ENCODE measurements at regions of chr3 and their contacts with region 1.

Region 1: DNA sequence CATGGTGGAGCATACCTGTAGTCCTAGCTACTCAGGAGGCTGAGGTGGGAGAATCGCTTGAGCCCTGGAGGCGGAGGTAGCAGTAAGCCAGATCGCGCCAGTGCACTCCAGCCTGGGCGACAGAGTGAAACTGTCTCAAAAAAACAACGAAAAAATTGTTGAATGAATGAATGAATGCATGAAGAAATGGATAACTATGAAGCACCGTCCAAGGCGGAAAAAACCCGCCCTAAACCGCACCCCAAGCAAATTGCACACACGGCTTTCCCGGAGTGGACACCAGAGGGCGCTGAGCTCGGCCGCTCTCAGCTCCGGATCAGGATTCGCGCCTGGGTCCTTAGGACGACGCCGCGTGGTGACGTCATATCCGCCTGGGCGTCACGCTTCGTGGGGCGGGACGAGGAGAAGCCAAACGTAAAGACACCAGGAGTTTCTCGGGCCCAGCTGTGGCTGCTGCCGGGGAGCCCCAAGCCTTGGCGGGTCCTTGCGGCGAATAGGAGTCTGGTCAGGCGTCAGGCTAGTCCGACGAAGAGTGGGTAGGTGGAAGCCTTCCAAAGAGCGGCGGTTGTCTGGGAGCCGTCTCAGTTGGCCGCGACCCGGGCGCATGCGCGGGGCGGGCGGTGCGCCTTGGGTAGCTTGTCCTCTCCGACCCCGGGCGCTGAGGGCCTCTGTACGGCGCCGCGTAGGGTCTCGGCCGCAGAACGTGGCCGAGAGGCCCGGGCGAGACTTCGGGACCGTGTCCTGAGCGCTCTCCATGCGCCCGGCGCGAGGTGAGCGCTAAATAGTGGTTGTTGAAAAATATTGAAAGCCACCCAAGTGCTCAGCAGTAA is at the starts of genes HTD2 and RPP14:
- DNase-seq: peak; percentile 97 to 100 (median 99)
- ATAC-seq: peak; percentile 89
- H3K4me3 ChIP-seq: peak within 1 kb of the TSS; percentile 85 to 99
- H3K4me3 Mint-ChIP-seq: peak within 1 kb of the TSS; percentile 97
- H3K27ac ChIP-seq: peak within 1 kb of the TSS; percentile 91 to 100
- H3K27ac Mint-ChIP-seq: peak within 1 kb of the TSS; percentile 99
- H3K4me1 ChIP-seq: peaks cover 18% of the 10 kb centered on the region
- H3K4me1 Mint-ChIP-seq: peaks cover 44% of the 10 kb centered on the region
- H3K27me3 ChIP-seq: no peaks in the 10 kb centered on the region
- H3K27me3 Mint-ChIP-seq: peaks cover 14% of the 10 kb centered on the region
- CTCF ChIP-seq: peak; percentile 93
- total RNA-seq, gene HTD2: 6.4 to 8.9 TPM
- total RNA-seq, gene RPP14: 18.3 to 20.4 TPM

Region 2: GRCh38 chr3:57227204-57227929 is 1078.7 kb before region 1 on chr3 and contains the start of gene APPL1:
- CTCF ChIA-PET with region 1: no interaction called
- POLR2A ChIA-PET with region 1: no interaction called
- intact Hi-C with region 1: loop called in 1 of 2 experiments (anchors 10 kb)
- DNase-seq: peak; percentile 68 to 93 (median 87)
- ATAC-seq: peak; percentile 89
- H3K4me3 ChIP-seq: peak within 1 kb of the TSS; percentile 82 to 91
- H3K4me3 Mint-ChIP-seq: peak within 1 kb of the TSS; percentile 93
- H3K27ac ChIP-seq: peak within 1 kb of the TSS; percentile 48 to 68
- H3K27ac Mint-ChIP-seq: peak within 1 kb of the TSS; percentile 89
- H3K4me1 ChIP-seq: peaks cover 11% of the 10 kb centered on the region
- H3K4me1 Mint-ChIP-seq: peaks cover 30% of the 10 kb centered on the region
- H3K27me3 ChIP-seq: no peaks in the 10 kb centered on the region
- H3K27me3 Mint-ChIP-seq: no peaks in the 10 kb centered on the region
- CTCF ChIP-seq: no peak
- total RNA-seq, gene APPL1: 19.3 to 23.4 TPM

Region 3: GRCh38 chr3:57755668-57756527 is 550.2 kb before region 1 on chr3 and contains the start of gene SLMAP:
- CTCF ChIA-PET with region 1: no interaction called
- POLR2A ChIA-PET with region 1: no interaction called
- intact Hi-C with region 1: loop called (anchors 2 to 5 kb)
- DNase-seq: peak; percentile 93 to 98 (median 96)
- ATAC-seq: peak; percentile 92
- H3K4me3 ChIP-seq: peak within 1 kb of the TSS; percentile 69 to 80
- H3K4me3 Mint-ChIP-seq: peak within 1 kb of the TSS; percentile 97
- H3K27ac ChIP-seq: peak within 1 kb of the TSS; percentile 45 to 79
- H3K27ac Mint-ChIP-seq: peak within 1 kb of the TSS; percentile 95
- H3K4me1 ChIP-seq: peaks cover 34% of the 10 kb centered on the region
- H3K4me1 Mint-ChIP-seq: peaks cover 44% of the 10 kb centered on the region
- H3K27me3 ChIP-seq: no peaks in the 10 kb centered on the region
- H3K27me3 Mint-ChIP-seq: no peaks in the 10 kb centered on the region
- CTCF ChIP-seq: no peak
- total RNA-seq, gene SLMAP: 55.0 to 56.7 TPM

Region 4: GRCh38 chr3:58237238-58237940 is 68.7 kb before region 1 on chr3 and contains the start of gene ABHD6:
- CTCF ChIA-PET with region 1: interaction called, 21 read pairs
- POLR2A ChIA-PET with region 1: interaction called, 6 read pairs
- intact Hi-C with region 1: loop called (anchors 1 kb)
- DNase-seq: peak; percentile 73 to 92 (median 83)
- ATAC-seq: peak; percentile 84
- H3K4me3 ChIP-seq: peak within 1 kb of the TSS; percentile 57 to 79
- H3K4me3 Mint-ChIP-seq: peak within 1 kb of the TSS; percentile 92
- H3K27ac ChIP-seq: peak within 1 kb of the TSS; percentile 38 to 49
- H3K27ac Mint-ChIP-seq: peak within 1 kb of the TSS; percentile 87
- H3K4me1 ChIP-seq: peaks cover 7% of the 10 kb centered on the region
- H3K4me1 Mint-ChIP-seq: peaks cover 17% of the 10 kb centered on the region
- H3K27me3 ChIP-seq: no peaks in the 10 kb centered on the region
- H3K27me3 Mint-ChIP-seq: peaks cover 14% of the 10 kb centered on the region
- CTCF ChIP-seq: no peak
- total RNA-seq, gene ABHD6: 1.9 to 2.1 TPM

Region 5: GRCh38 chr3:58332575-58333188 is 26.6 kb after region 1 on chr3 and contains the start of gene PXK:
- CTCF ChIA-PET with region 1: interaction called, 19 read pairs
- POLR2A ChIA-PET with region 1: interaction called, 8 read pairs
- intact Hi-C with region 1: loop called (anchors 1 kb)
- DNase-seq: peak; percentile 62 to 86 (median 76)
- ATAC-seq: peak; percentile 90
- H3K4me3 ChIP-seq: peak within 1 kb of the TSS; percentile 71 to 78
- H3K4me3 Mint-ChIP-seq: peak within 1 kb of the TSS; percentile 100
- H3K27ac ChIP-seq: peak within 1 kb of the TSS in 1 of 2 experiments; percentile 25
- H3K27ac Mint-ChIP-seq: peak within 1 kb of the TSS; percentile 94
- H3K4me1 ChIP-seq: peaks cover 29% of the 10 kb centered on the region
- H3K4me1 Mint-ChIP-seq: peaks cover 30% of the 10 kb centered on the region
- H3K27me3 ChIP-seq: no peaks in the 10 kb centered on the region
- H3K27me3 Mint-ChIP-seq: no peaks in the 10 kb centered on the region
- CTCF ChIP-seq: no peak
- total RNA-seq, gene PXK: 14.9 to 15.0 TPM

Region 6: DNA sequence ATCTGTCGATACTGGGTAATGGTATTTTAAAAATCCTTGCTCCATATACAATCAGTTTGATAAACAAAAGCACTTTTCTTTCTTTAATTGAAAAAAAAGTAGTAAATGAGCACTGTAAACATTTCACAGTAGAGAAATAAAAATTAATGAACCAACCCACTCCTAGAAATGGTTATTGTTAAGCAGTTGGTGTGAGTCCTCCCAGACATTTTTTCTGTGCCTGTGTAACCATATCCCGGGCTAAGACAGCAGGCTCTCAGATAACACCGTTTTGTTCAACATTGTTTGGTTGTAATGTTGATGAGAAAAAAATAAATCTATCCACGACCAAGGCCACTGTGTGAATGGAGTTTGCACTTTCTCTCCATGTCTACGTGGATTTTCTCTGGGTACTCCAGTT is 69.2 kb after region 1 on chr3:
- CTCF ChIA-PET with region 1: no interaction called
- POLR2A ChIA-PET with region 1: no interaction called
- intact Hi-C with region 1: no loop called
- DNase-seq: no peak
- ATAC-seq: no peak
- H3K4me3 ChIP-seq: no peak overlapping the region
- H3K4me3 Mint-ChIP-seq: no peak overlapping the region
- H3K27ac ChIP-seq: no peak overlapping the region
- H3K27ac Mint-ChIP-seq: no peak overlapping the region
- H3K4me1 ChIP-seq: no peaks in the 10 kb centered on the region
- H3K4me1 Mint-ChIP-seq: no peaks in the 10 kb centered on the region
- H3K27me3 ChIP-seq: no peaks in the 10 kb centered on the region
- H3K27me3 Mint-ChIP-seq: no peaks in the 10 kb centered on the region
- CTCF ChIP-seq: no peak

Region 7: DNA sequence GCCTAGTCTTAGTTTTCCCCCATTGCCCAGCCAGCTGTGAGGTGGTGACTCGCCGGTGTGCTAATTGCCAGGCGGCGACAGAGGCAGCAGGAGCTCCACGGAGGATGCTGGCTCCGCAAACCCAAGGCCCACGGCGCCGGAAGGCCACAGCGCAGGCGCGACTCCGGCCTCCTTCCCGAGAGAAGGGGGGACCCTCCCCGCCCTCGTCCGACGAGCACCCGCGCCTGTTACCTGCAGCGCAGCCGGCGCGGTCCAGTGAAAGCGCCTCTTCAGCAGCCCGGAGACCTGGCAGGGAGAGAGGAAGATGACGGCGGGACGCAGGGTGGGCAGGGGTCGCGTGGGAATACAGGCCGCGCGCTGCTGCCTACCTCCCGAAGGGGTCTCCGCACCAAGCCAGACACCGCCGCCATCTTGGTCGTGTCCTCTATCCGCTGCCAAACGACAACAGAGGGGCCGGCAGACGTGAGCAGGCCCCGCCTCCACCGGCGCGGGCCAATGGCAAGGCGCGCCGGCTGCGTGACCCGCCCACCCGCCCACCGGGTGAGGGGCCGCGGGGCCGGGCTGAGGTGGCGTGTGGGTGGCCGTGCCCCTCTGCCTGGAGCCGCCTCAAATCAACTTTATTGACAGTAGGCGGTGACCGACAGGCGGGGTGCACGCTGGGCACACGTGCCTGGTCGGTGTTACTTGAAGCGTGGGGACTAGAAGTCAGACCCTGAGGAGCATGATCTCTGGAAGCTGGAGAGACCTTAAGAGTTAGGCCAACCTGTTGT is 127.5 kb after region 1 on chr3 and contains the start of gene PDHB:
- CTCF ChIA-PET with region 1: interaction called, 5 read pairs
- POLR2A ChIA-PET with region 1: interaction called, 8 read pairs
- intact Hi-C with region 1: loop called (anchors 1 kb)
- DNase-seq: peak; percentile 74 to 94 (median 88)
- ATAC-seq: peak; percentile 97
- H3K4me3 ChIP-seq: peak within 1 kb of the TSS; percentile 88 to 98
- H3K4me3 Mint-ChIP-seq: peak within 1 kb of the TSS; percentile 92
- H3K27ac ChIP-seq: peak within 1 kb of the TSS; percentile 86 to 87
- H3K27ac Mint-ChIP-seq: peak within 1 kb of the TSS; percentile 97
- H3K4me1 ChIP-seq: peaks cover 10% of the 10 kb centered on the region
- H3K4me1 Mint-ChIP-seq: peaks cover 25% of the 10 kb centered on the region
- H3K27me3 ChIP-seq: no peaks in the 10 kb centered on the region
- H3K27me3 Mint-ChIP-seq: no peaks in the 10 kb centered on the region
- CTCF ChIP-seq: no peak
- total RNA-seq, gene PDHB: 32.5 to 33.2 TPM

Region 8: DNA sequence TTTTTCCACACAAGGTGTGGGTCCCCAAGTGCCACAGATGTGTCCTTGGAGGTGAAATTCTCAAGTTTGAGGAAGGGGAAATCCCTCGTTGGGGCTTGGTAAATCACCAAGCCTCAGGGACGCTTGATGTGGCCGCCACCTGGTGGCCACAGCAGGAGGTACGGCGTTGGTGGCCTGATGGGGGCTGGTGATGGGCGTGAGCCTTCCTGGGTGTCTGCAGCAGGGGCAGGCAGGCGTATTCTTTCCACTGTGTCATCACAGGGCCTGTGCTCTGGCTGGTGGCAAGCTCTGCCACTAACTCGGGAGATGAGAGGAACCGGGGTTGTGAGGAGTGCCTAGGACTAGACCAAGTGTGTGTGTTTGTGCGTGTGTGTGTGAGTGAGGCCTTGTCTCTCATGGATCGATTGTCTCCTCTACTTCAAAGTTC is 226.7 kb after region 1 on chr3:
- CTCF ChIA-PET with region 1: interaction called, 14 read pairs
- POLR2A ChIA-PET with region 1: no interaction called
- intact Hi-C with region 1: loop called (anchors 1 to 2 kb)
- DNase-seq: peak; percentile 60 to 88 (median 75)
- ATAC-seq: peak; percentile 99
- H3K4me3 ChIP-seq: no peak overlapping the region
- H3K4me3 Mint-ChIP-seq: no peak overlapping the region
- H3K27ac ChIP-seq: no peak overlapping the region
- H3K27ac Mint-ChIP-seq: no peak overlapping the region
- H3K4me1 ChIP-seq: no peaks in the 10 kb centered on the region
- H3K4me1 Mint-ChIP-seq: peaks cover 7% of the 10 kb centered on the region
- H3K27me3 ChIP-seq: no peaks in the 10 kb centered on the region
- H3K27me3 Mint-ChIP-seq: no peaks in the 10 kb centered on the region
- CTCF ChIP-seq: peak; percentile 78